ENCODE measurements at regions of chr6 and their contacts with region 1.

Region 1: DNA sequence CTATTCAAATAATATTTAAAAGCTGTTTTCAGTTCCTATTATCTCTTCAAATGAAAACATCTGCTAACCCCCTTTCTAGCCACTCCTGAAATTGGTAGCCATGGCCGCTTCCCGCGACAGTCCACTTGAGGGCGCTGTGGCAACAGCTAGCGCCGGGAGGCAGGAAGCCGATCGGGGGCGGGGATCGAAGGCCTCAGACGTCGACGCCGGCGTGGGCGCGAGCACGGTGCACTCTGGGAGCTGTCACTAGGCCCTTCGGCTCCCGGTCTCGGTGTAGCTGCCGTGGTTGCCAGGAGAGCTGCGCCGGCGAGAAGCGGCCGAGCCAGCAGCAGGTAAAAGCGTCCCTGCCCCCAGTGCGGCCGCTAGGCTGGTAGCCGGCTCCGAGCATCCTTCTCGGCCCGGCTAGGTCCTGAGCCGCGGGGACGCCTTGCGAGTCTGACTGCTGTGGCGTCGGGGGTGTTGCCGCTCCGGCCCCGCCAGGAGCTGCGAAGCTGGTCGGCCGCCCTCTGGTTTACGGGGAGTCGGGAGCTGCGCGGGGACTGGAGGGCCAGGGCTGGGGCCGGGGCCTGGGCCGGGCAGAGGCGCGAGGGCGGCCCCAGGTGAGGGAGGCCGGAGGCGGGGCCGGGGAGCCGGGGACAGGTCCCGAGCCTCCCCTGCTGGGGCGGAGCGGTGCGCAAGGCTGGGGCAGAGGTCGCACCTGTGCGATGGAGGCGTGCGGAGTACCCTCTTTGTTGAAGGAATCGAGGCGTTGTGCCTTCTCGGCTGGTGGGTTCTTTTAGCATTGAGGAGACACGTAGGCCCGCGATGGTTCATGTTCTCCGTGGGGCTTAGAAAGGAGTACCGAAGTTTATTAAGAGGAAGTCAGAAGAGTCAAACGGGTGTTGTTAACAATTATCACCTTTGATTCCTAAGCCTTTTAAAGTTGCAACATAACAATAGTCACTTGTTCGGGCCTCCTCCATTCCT is at the start of gene DOP1A:
- DNase-seq: peak; percentile 98
- H3K4me3 Mint-ChIP-seq: peak within 1 kb of the TSS; percentile 87
- H3K27ac Mint-ChIP-seq: peak within 1 kb of the TSS; percentile 76
- H3K4me1 Mint-ChIP-seq: peaks cover 40% of the 10 kb centered on the region
- H3K27me3 Mint-ChIP-seq: no peaks in the 10 kb centered on the region
- total RNA-seq, gene DOP1A: 5.0 to 6.5 TPM

Region 2: DNA sequence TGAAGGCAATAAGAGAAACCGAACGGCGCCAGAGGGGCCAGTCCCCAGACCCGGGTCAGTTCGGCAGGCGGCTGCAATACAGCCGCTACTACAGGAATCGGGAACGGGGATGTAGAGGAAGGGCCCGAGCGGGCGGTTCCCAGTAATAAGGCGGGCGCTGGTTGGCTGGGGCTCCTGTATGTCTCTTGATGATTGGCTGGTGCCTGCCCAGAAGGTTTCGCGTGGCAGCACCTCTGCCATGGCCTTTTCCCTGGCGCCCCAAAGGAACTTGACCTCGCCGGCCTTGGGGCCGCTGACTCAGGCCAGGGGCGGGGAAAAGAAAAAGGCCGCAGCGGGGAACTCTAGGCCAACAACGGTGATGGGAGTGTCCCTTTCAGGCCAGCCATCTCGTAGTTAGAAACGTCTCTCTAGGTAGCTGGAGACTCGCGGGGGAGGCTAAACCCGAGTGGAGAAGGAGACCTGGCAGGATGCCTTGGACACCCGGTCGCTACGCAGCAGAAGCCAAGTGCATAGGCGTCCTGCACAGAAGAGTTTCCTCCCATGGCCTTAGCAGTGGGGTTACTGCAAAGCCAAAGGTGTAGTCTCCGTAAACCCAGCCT is 820.0 kb before region 1 on chr6 and contains the start of gene IBTK:
- CTCF ChIA-PET with region 1: interaction called, 15 read pairs
- intact Hi-C with region 1: loop called (anchors 1 kb)
- DNase-seq: peak; percentile 91
- H3K4me3 Mint-ChIP-seq: peak within 1 kb of the TSS; percentile 92
- H3K27ac Mint-ChIP-seq: peak within 1 kb of the TSS; percentile 90
- H3K4me1 Mint-ChIP-seq: peaks cover 32% of the 10 kb centered on the region
- H3K27me3 Mint-ChIP-seq: no peaks in the 10 kb centered on the region
- total RNA-seq, gene IBTK: 25.3 to 25.9 TPM

Region 3: DNA sequence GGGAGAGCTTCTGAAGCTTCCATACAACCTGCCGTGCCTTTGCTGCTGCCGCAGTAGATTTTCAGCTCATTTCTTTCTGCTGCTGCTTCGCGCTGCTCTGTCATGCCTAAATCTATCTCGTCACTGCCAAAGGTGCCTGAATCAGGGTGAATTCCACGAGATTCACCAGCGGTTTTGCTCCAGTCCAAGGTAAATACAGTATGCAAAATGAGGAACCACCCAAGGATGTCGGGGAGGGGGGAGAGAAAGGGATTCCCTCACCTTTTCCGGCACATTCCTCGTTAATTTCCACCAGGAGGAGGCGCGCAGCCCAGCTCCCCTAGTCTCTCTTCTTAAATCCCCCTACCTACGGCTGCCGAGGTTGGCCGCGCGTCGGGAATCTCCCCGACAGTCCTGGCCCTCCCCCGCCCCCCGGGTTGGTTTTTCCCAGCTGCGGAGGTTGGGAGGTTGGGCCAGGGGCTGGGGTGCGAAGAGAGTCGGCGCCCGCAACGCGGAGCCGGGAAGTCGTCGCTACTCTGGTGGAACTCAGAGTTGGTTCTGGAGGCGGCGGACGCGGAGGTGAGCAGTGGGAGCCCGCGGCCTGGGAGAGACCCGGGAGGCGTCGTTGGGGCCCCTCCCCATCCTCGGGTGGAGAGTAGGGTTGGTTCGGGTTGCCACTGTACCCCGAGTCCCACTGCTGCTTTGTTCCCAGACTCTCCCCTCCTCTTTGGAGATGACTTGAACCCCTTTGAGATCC is 704.2 kb before region 1 on chr6 and contains the start of gene TPBG:
- CTCF ChIA-PET with region 1: no interaction called
- intact Hi-C with region 1: loop called (anchors 5 kb)
- DNase-seq: peak; percentile 39
- H3K4me3 Mint-ChIP-seq: peak within 1 kb of the TSS; percentile 69
- H3K27ac Mint-ChIP-seq: no peak within 1 kb of the TSS
- H3K4me1 Mint-ChIP-seq: peaks cover 19% of the 10 kb centered on the region
- H3K27me3 Mint-ChIP-seq: peaks cover 50% of the 10 kb centered on the region
- total RNA-seq, gene TPBG: 0.07 TPM in 1 of 2 experiments, not detected in the other

Region 4: DNA sequence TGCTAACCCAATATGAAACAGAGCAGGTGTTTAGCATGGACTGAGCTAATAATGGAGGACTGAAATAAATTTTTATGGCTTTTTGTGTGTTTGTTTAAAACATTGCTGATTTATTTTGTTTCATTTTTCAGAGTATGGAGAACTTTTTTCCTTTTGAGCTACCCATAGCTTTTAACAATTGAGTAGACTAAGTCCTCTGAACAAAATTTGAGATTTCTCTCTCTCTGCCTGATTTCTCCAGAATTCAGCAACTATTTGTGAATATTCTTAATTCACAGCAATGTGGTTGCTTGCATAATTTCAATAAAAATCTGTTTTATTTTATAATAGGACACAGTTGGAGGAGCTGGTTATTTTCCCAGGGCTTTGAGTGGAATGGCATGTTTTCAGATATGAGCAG is 600.4 kb before region 1 on chr6:
- CTCF ChIA-PET with region 1: no interaction called
- intact Hi-C with region 1: no loop called
- DNase-seq: no peak
- H3K4me3 Mint-ChIP-seq: no peak overlapping the region
- H3K27ac Mint-ChIP-seq: no peak overlapping the region
- H3K4me1 Mint-ChIP-seq: no peaks in the 10 kb centered on the region
- H3K27me3 Mint-ChIP-seq: no peaks in the 10 kb centered on the region

Region 5: DNA sequence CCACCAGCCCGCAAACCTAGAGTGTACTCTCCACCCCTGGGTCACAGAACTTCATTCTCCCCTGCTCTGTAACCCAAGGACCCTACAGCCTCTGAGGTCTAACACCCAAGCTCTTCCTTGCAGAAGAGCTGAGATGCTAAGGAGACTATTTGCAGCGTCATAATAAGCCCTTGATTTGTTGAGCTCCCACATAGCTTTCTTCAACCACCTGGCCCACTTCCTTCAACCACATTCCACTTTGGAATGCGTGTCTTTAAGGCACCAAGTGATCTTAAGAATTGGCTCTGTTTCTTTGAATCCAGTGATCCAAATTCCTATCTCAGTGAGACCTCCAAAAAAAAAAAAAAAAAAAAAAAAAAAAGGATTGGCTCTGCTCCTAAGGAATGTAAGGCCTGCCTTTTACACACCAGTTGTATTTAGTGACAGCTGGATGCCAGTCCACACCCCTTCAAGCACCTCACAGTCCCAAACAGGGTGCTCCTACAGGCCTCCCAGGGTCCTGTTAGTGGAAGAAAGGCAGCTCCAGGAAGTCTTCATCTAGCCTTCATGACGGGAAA is 108.3 kb before region 1 on chr6:
- CTCF ChIA-PET with region 1: no interaction called
- intact Hi-C with region 1: no loop called
- DNase-seq: no peak
- H3K4me3 Mint-ChIP-seq: no peak overlapping the region
- H3K27ac Mint-ChIP-seq: no peak overlapping the region
- H3K4me1 Mint-ChIP-seq: no peaks in the 10 kb centered on the region
- H3K27me3 Mint-ChIP-seq: no peaks in the 10 kb centered on the region

Region 6: GRCh38 chr6:83108378-83108777 is 40.6 kb after region 1 on chr6:
- CTCF ChIA-PET with region 1: interaction called, 12 read pairs
- intact Hi-C with region 1: no loop called
- DNase-seq: no peak
- H3K4me3 Mint-ChIP-seq: no peak overlapping the region
- H3K27ac Mint-ChIP-seq: no peak overlapping the region
- H3K4me1 Mint-ChIP-seq: no peaks in the 10 kb centered on the region
- H3K27me3 Mint-ChIP-seq: no peaks in the 10 kb centered on the region

Region 7: GRCh38 chr6:83215131-83216047 is 147.7 kb after region 1 on chr6:
- CTCF ChIA-PET with region 1: interaction called, 149 read pairs
- intact Hi-C with region 1: loop called (anchors 1 kb)
- DNase-seq: peak; percentile 80
- H3K4me3 Mint-ChIP-seq: no peak overlapping the region
- H3K27ac Mint-ChIP-seq: no peak overlapping the region
- H3K4me1 Mint-ChIP-seq: no peaks in the 10 kb centered on the region
- H3K27me3 Mint-ChIP-seq: no peaks in the 10 kb centered on the region

Region 8: GRCh38 chr6:83514866-83515466 is 447.2 kb after region 1 on chr6:
- CTCF ChIA-PET with region 1: interaction called, 66 read pairs
- intact Hi-C with region 1: loop called (anchors 1 kb)
- DNase-seq: peak; percentile 45
- H3K4me3 Mint-ChIP-seq: no peak overlapping the region
- H3K27ac Mint-ChIP-seq: no peak overlapping the region
- H3K4me1 Mint-ChIP-seq: peaks cover 7% of the 10 kb centered on the region
- H3K27me3 Mint-ChIP-seq: peaks cover 39% of the 10 kb centered on the region

Region 9: GRCh38 chr6:83758533-83758932 is 690.8 kb after region 1 on chr6:
- CTCF ChIA-PET with region 1: no interaction called
- intact Hi-C with region 1: no loop called
- DNase-seq: no peak
- H3K4me3 Mint-ChIP-seq: no peak overlapping the region
- H3K27ac Mint-ChIP-seq: no peak overlapping the region
- H3K4me1 Mint-ChIP-seq: no peaks in the 10 kb centered on the region
- H3K27me3 Mint-ChIP-seq: no peaks in the 10 kb centered on the region

Region 10: GRCh38 chr6:84103029-84103428 is 1035.3 kb after region 1 on chr6:
- CTCF ChIA-PET with region 1: no interaction called
- intact Hi-C with region 1: no loop called
- DNase-seq: no peak
- H3K4me3 Mint-ChIP-seq: no peak overlapping the region
- H3K27ac Mint-ChIP-seq: no peak overlapping the region
- H3K4me1 Mint-ChIP-seq: no peaks in the 10 kb centered on the region
- H3K27me3 Mint-ChIP-seq: peaks cover 9% of the 10 kb centered on the region

Region 11: DNA sequence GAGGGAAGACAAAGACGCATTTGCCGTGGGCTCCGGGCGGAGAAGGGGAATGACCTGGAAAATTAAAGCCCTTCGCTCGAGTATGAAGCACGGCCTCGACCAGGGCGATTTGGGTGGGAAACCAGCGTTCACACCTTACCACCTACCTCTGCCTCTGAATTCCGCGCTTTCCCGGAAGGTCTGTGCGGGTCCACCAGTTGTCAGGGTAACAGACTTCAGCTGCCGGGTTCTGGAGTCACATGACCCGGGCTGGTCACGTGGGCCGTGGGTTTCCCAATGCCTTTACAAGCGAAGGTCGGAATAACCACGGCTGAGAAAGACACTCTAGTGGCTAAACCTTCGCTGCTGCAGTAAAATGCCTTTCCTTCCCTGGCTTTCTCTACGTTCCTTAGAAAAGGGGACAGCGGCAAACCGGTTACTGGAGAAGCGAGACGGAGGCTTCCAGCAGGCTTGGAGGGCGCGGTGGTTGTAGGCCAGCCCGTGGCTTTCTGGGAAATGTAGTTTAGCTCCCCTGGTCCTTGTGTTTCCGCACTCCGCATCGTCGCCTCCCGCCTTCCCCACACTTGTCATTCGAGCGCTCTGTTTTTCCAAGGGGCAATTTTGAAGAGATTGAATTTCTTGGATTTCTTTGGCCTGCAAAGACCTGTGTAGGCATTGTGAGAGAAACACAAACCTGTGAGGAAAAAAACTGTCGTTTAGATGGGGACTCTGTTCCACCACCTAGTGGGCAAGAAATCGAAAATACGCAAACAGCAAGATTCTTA is 1159.9 kb after region 1 on chr6 and contains the start of gene CEP162:
- CTCF ChIA-PET with region 1: interaction called, 5 read pairs
- intact Hi-C with region 1: loop called (anchors 5 kb)
- DNase-seq: peak; percentile 91
- H3K4me3 Mint-ChIP-seq: peak within 1 kb of the TSS; percentile 99
- H3K27ac Mint-ChIP-seq: peak within 1 kb of the TSS; percentile 93
- H3K4me1 Mint-ChIP-seq: peaks cover 11% of the 10 kb centered on the region
- H3K27me3 Mint-ChIP-seq: peaks cover 5% of the 10 kb centered on the region
- total RNA-seq, gene CEP162: 4.4 to 5.0 TPM

Measured in activated naive CD4-positive, alpha-beta T cell treated with anti-CD3 and anti-CD28 coated beads for 36 hours (primary cell).